ENCODE measurements at regions of chr11 and their contacts with region 1.

Region 1: DNA sequence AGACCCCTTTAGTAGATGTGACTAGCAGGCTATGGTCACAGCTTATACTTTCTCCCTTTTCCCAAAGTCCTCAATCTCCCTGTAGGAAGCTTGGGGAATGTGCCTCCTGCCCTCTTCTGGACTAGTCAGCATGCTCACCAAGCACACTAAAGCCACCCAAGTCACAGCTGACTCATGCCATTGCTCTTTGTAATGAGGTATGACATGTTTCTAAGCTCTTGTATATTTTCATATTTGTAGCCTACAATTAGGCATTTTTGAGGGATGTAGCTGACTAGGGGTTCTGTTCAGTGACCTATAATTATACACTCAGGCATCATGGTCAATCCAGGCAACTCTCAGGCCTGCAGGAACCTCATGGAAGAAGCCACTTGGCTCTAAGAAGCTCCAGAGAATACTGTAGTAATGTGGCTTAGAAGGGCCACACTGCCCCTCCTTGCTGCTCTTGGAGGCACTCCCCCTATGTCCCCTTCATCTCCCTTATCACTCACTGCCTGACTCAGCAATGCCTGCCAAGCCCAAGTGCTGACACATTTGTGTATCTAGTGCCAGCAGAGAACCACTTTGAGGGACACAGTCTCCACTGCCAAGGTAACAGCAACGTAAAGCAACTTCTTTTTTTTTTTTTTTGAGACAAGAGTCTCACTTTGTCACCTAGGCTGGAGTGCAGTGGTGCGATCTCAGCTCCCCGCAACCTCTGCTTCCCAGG is 86.2 kb downstream of the RPL27A start:
- DNase-seq: peak; percentile 66
- H3K4me3 ChIP-seq: no peak overlapping the region
- H3K27ac ChIP-seq: peak overlapping the region; percentile 96
- H3K4me1 ChIP-seq: peaks cover 81% of the 10 kb centered on the region
- H3K27me3 ChIP-seq: no peaks in the 10 kb centered on the region
- CTCF ChIP-seq: peak; percentile 19 to 60

Region 2: GRCh38 chr11:8488395-8488794 is 280.4 kb before region 1 on chr11:
- CTCF ChIA-PET with region 1: no interaction called
- dilution Hi-C with region 1: no loop called
- in situ Hi-C with region 1: no loop called
- intact Hi-C with region 1: no loop called
- DNase-seq: no peak
- H3K4me3 ChIP-seq: no peak overlapping the region
- H3K27ac ChIP-seq: no peak overlapping the region
- H3K4me1 ChIP-seq: no peaks in the 10 kb centered on the region
- H3K27me3 ChIP-seq: no peaks in the 10 kb centered on the region
- CTCF ChIP-seq: no peak

Region 3: GRCh38 chr11:8688414-8689362 is 80.1 kb before region 1 on chr11:
- CTCF ChIA-PET with region 1: interaction called, 3 read pairs
- dilution Hi-C with region 1: no loop called
- in situ Hi-C with region 1: no loop called
- intact Hi-C with region 1: loop called (anchors 1 kb)
- DNase-seq: peak; percentile 95
- H3K4me3 ChIP-seq: peak overlapping the region; percentile 51 to 62 (median 52)
- H3K27ac ChIP-seq: peak overlapping the region; percentile 52
- H3K4me1 ChIP-seq: peaks cover 36% of the 10 kb centered on the region
- H3K27me3 ChIP-seq: no peaks in the 10 kb centered on the region
- CTCF ChIP-seq: peak in 1 of 2 donors; percentile 8

Region 4: GRCh38 chr11:8717876-8718753 is 50.7 kb before region 1 on chr11:
- CTCF ChIA-PET with region 1: interaction called, 3 read pairs
- dilution Hi-C with region 1: no loop called
- in situ Hi-C with region 1: no loop called
- intact Hi-C with region 1: loop called (anchors 2 kb)
- DNase-seq: peak; percentile 33
- H3K4me3 ChIP-seq: no peak overlapping the region
- H3K27ac ChIP-seq: peak overlapping the region; percentile 46
- H3K4me1 ChIP-seq: peaks cover 61% of the 10 kb centered on the region
- H3K27me3 ChIP-seq: no peaks in the 10 kb centered on the region
- CTCF ChIP-seq: no peak

Region 5: GRCh38 chr11:8744423-8744822 is 24.4 kb before region 1 on chr11:
- CTCF ChIA-PET with region 1: interaction called, 4 read pairs
- dilution Hi-C with region 1: no loop called
- in situ Hi-C with region 1: no loop called
- intact Hi-C with region 1: loop called (anchors 1 kb)
- DNase-seq: peak; percentile 91
- H3K4me3 ChIP-seq: no peak overlapping the region
- H3K27ac ChIP-seq: peak overlapping the region; percentile 41
- H3K4me1 ChIP-seq: peaks cover 16% of the 10 kb centered on the region
- H3K27me3 ChIP-seq: no peaks in the 10 kb centered on the region
- CTCF ChIP-seq: no peak

Region 6: DNA sequence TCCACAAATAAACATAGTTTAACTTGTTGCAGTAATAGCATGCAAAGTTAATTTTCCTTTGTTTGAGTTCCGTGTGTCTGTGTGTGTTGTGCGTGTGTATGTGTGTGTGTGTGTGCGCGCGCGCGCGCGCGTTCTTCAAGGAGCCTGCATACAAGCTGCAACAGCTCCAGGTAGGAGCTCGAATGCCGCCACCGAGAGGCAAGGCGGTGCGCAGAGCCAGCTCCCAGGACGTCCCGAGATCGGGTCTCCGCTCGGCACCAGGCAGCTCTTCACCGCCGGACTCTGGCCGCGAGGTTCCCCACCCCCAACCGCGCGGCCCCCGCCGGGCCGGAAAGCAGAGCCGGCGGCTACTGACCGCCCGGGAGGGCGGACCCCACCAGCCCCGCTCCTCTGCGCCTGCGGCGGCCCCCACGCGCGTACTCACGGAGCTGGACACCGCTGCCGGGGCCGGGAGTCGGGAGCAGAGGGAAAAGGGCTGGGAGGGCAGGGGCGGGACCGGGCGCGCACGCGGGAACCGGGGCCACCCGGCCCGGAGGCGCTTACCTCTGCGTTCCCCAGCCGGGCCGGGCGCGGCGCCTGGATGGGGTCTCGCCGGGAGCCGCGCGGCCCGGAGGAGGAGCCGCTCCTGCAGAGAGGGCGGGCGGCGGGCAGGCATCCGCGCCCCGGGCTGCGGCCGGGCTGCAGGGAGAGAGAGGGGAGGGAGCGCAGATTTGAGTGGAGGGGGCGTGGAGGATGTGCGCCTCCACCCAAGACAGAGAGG is 101.8 kb after region 1 on chr11:
- CTCF ChIA-PET with region 1: no interaction called
- dilution Hi-C with region 1: no loop called
- in situ Hi-C with region 1: no loop called
- intact Hi-C with region 1: loop called (anchors 1 kb)
- DNase-seq: peak; percentile 74
- H3K4me3 ChIP-seq: peak overlapping the region; percentile 49 to 78 (median 76)
- H3K27ac ChIP-seq: peak overlapping the region; percentile 6
- H3K4me1 ChIP-seq: peaks cover 13% of the 10 kb centered on the region
- H3K27me3 ChIP-seq: no peaks in the 10 kb centered on the region
- CTCF ChIP-seq: peak in 1 of 2 donors; percentile 16

Region 7: GRCh38 chr11:9066433-9066925 is 297.7 kb after region 1 on chr11:
- CTCF ChIA-PET with region 1: no interaction called
- dilution Hi-C with region 1: no loop called
- in situ Hi-C with region 1: no loop called
- intact Hi-C with region 1: no loop called
- DNase-seq: no peak
- H3K4me3 ChIP-seq: no peak overlapping the region
- H3K27ac ChIP-seq: no peak overlapping the region
- H3K4me1 ChIP-seq: no peaks in the 10 kb centered on the region
- H3K27me3 ChIP-seq: no peaks in the 10 kb centered on the region
- CTCF ChIP-seq: no peak

Measured in mammary epithelial cell (primary cell).